Heart left ventricle (tissue), 16 donors: ENCODE measurements at regions of chr17 and their contacts with region 1.

Region 1: GRCh38 chr17:75012346-75013091 is at the start of gene MRPL58:
- DNase-seq: peak; percentile 83 to 90 (median 87)
- ATAC-seq: peak; percentile 76 to 93 (median 91)
- H3K4me3 ChIP-seq: peak within 1 kb of the TSS; percentile 68 to 96 (median 89)
- H3K27ac ChIP-seq: peak within 1 kb of the TSS; percentile 52 to 96 (median 90)
- H3K4me1 ChIP-seq: peaks cover 0 to 34% (median 22%) of the 10 kb centered on the region in 12 donors
- H3K27me3 ChIP-seq: no peaks in the 10 kb centered on the region
- CTCF ChIP-seq: peak; percentile 37 to 76 (median 64)
- POLR2A ChIP-seq: no peak
- total RNA-seq, gene MRPL58: 41.0 to 89.4 (median 55.8) TPM

Region 2: GRCh38 chr17:74923533-74924249 is 88.8 kb before region 1 on chr17:
- intact Hi-C with region 1: no loop called
- DNase-seq: peak; percentile 56 to 89 (median 66)
- ATAC-seq: peak in 3 of 4 donors; percentile 41 to 72 (median 55)
- H3K4me3 ChIP-seq: peak overlapping the region in 11 of 12 donors; percentile 3 to 45 (median 31)
- H3K27ac ChIP-seq: no peak overlapping the region
- H3K4me1 ChIP-seq: peaks cover 0 to 30% (median 17%) of the 10 kb centered on the region in 12 donors
- H3K27me3 ChIP-seq: peaks cover 30 to 91% (median 72%) of the 10 kb centered on the region in 9 donors
- CTCF ChIP-seq: peak; percentile 65 to 86 (median 76)
- POLR2A ChIP-seq: no peak

Region 3: DNA sequence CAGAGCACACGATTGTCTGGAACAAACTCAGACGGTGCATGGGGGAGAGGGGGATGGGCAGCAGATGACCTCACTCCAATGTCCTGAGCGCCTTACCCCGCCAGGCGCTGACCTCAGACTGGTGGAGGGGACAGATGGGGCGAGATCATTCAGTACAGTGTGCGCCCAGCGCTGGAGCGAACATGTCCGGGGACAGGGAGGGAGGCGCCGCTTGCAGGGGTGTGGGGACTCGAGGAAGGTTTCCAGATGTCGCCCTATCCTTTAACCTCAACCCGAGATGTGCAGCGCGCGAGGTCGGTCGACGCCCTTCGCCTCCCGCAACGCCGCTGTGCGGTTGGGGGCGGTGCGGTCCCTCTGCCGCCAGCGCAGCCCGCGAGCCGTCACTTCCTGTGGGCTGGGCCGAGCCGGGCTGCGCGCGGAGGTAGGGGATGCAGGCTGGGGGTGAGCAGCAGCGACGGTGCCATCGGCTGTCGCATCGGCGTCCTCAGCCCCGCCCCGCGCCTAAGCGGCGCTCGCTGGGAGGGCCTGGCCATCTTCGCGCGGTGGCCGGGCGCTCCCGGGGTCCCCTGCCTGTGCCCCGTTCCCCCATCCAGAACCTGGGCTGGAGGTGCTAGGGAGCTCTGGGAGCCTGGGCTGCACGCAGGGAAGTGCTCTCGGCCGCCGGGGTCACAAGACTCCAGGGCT is 30.4 kb before region 1 on chr17:
- intact Hi-C with region 1: loop called in 3 of 10 experiments (anchors 1 to 5 kb)
- DNase-seq: peak; percentile 76 to 90 (median 84)
- ATAC-seq: peak; percentile 86 to 95 (median 94)
- H3K4me3 ChIP-seq: peak overlapping the region; percentile 45 to 94 (median 68)
- H3K27ac ChIP-seq: peak overlapping the region; percentile 83 to 95 (median 90)
- H3K4me1 ChIP-seq: peaks cover 6 to 27% (median 20%) of the 10 kb centered on the region in 12 donors
- H3K27me3 ChIP-seq: peaks cover 0 to 12% (median 0%) of the 10 kb centered on the region in 9 donors
- CTCF ChIP-seq: peak in 5 of 12 donors; percentile 7 to 29 (median 23)
- POLR2A ChIP-seq: peak in 1 of 2 donors; percentile 77

Region 4: GRCh38 chr17:74987418-74987908 is 25.1 kb before region 1 on chr17 and contains the start of gene CDR2L:
- intact Hi-C with region 1: loop called in 4 of 10 experiments (anchors 1 to 2 kb)
- DNase-seq: peak; percentile 97 to 99 (median 97)
- ATAC-seq: peak; percentile 87 to 95 (median 91)
- H3K4me3 ChIP-seq: peak within 1 kb of the TSS; percentile 63 to 92 (median 84)
- H3K27ac ChIP-seq: peak within 1 kb of the TSS; percentile 92 to 99 (median 96)
- H3K4me1 ChIP-seq: peaks cover 3 to 48% (median 29%) of the 10 kb centered on the region in 12 donors
- H3K27me3 ChIP-seq: no peaks in the 10 kb centered on the region
- CTCF ChIP-seq: peak in 1 of 12 donors; percentile 5
- POLR2A ChIP-seq: peak; percentile 96 to 100
- total RNA-seq, gene CDR2L: 13.0 to 56.4 (median 18.1) TPM

Region 5: GRCh38 chr17:74993453-74994021 is 19.0 kb before region 1 on chr17:
- intact Hi-C with region 1: loop called in 2 of 10 experiments (anchors 2 kb)
- DNase-seq: no peak
- ATAC-seq: no peak
- H3K4me3 ChIP-seq: no peak overlapping the region
- H3K27ac ChIP-seq: peak overlapping the region in 4 of 12 donors; percentile 66 to 83 (median 72)
- H3K4me1 ChIP-seq: peaks cover 2 to 49% (median 25%) of the 10 kb centered on the region in 12 donors
- H3K27me3 ChIP-seq: no peaks in the 10 kb centered on the region
- CTCF ChIP-seq: no peak
- POLR2A ChIP-seq: no peak